HCT116 (cell line): ENCODE measurements at regions of chr7 and their contacts with region 1.

Region 1: GRCh38 chr7:33744293-33745075 is 160.9 kb upstream of the BMPER start:
- DNase-seq: peak; percentile 21
- ATAC-seq: peak; percentile 65; the same call in 1 of the 2 replicates
- H3K4me3 ChIP-seq: no peak overlapping the region
- H3K27ac ChIP-seq: no peak overlapping the region
- H3K4me1 ChIP-seq: no peaks in the 10 kb centered on the region
- H3K27me3 ChIP-seq: no peaks in the 10 kb centered on the region
- CTCF ChIP-seq: peak; percentile 36 to 55 (median 42); a peak in 4 of 6 replicates
- POLR2A ChIP-seq: no peak
- RAD21 ChIP-seq: peak; percentile 50

Region 2: GRCh38 chr7:33243319-33243881 is 501.1 kb before region 1 on chr7:
- CTCF ChIA-PET with region 1: no interaction called
- POLR2A ChIA-PET with region 1: no interaction called
- RAD21 ChIA-PET with region 1: no interaction called
- intact Hi-C with region 1: loop called (anchors 2 kb)
- DNase-seq: peak; percentile 26
- ATAC-seq: peak; percentile 85
- H3K4me3 ChIP-seq: no peak overlapping the region
- H3K27ac ChIP-seq: no peak overlapping the region
- H3K4me1 ChIP-seq: no peaks in the 10 kb centered on the region
- H3K27me3 ChIP-seq: no peaks in the 10 kb centered on the region
- CTCF ChIP-seq: peak; percentile 57 to 76 (median 66)
- POLR2A ChIP-seq: no peak
- RAD21 ChIP-seq: peak; percentile 75

Region 3: GRCh38 chr7:33423646-33424020 is 320.9 kb before region 1 on chr7:
- CTCF ChIA-PET with region 1: no interaction called
- POLR2A ChIA-PET with region 1: no interaction called
- RAD21 ChIA-PET with region 1: no interaction called
- intact Hi-C with region 1: loop called (anchors 10 kb)
- DNase-seq: peak; percentile 10
- ATAC-seq: no peak
- H3K4me3 ChIP-seq: no peak overlapping the region
- H3K27ac ChIP-seq: no peak overlapping the region
- H3K4me1 ChIP-seq: no peaks in the 10 kb centered on the region
- H3K27me3 ChIP-seq: no peaks in the 10 kb centered on the region
- CTCF ChIP-seq: peak; percentile 34 to 67 (median 58); a peak in 4 of 6 replicates
- POLR2A ChIP-seq: no peak
- RAD21 ChIP-seq: peak; percentile 59

Region 4: GRCh38 chr7:33932832-33933468 is 188.5 kb after region 1 on chr7:
- CTCF ChIA-PET with region 1: no interaction called
- POLR2A ChIA-PET with region 1: no interaction called
- RAD21 ChIA-PET with region 1: no interaction called
- intact Hi-C with region 1: no loop called
- DNase-seq: peak; percentile 66
- ATAC-seq: peak; percentile 95
- H3K4me3 ChIP-seq: no peak overlapping the region; a peak in 1 of 4 replicates
- H3K27ac ChIP-seq: no peak overlapping the region
- H3K4me1 ChIP-seq: peaks cover 3 to 8% of the 10 kb centered on the region in 2 experiments; a peak in 3 of 4 replicates
- H3K27me3 ChIP-seq: no peaks in the 10 kb centered on the region; the same call in 1 of the 2 replicates
- CTCF ChIP-seq: peak; percentile 64 to 96 (median 93); a peak in 5 of 6 replicates
- POLR2A ChIP-seq: no peak
- RAD21 ChIP-seq: peak; percentile 74

Region 5: DNA sequence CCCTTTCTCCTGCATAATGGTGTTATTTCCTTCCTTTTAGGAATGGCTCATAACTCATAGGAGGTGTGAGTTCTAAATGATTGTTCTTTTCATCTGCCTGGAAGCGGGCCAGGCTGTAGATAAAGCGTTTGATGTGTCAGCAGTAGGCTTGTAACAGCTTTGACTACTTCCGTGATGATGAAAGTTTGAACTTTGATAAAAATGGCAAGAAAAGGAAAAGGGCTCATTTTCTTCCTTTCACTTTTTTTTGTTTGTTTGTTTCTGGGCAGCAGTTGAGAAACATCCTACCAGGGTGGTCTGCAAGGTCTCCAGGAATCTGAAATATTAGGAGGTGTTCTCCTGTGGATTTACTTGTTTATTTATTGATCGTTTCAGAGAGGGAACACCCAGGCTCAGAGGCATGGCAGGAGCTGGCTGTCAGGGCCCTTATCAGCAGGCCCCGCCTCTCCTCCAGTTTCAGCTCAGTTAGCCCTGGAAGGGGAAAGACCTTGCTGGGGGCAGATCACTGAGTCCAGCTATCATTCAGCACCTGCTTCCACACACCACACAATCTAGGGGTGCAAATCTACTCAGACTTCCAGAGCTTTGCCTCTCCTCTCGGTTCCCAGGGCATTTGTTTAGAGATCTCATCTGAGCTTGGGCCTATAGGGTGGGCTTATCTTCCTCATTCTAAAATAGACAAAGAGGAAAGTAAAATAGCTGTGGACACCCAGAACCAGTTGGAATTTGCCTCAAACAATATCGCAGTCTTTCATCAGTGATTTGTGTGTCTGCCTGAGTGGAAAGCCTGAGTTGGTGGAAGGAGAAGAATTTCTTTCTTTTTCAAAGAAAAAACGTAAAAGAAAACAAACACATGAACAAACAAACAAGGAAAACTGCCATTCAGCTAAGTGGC is 291.8 kb after region 1 on chr7:
- CTCF ChIA-PET with region 1: no interaction called
- POLR2A ChIA-PET with region 1: no interaction called
- RAD21 ChIA-PET with region 1: no interaction called
- intact Hi-C with region 1: no loop called
- DNase-seq: peak; percentile 61
- ATAC-seq: peak; percentile 93
- H3K4me3 ChIP-seq: peak overlapping the region in 1 of 2 experiments; percentile 38; a peak in 2 of 4 replicates
- H3K27ac ChIP-seq: 0 out of 2 replicates have a peak overlapping the region, but pooled peaks have one; percentile 1
- H3K4me1 ChIP-seq: peaks cover 17 to 19% of the 10 kb centered on the region in 2 experiments; a peak in 3 of 4 replicates
- H3K27me3 ChIP-seq: no peaks in the 10 kb centered on the region
- CTCF ChIP-seq: no peak
- POLR2A ChIP-seq: no peak
- RAD21 ChIP-seq: no peak